Ascending aorta (tissue), 2 donors: ENCODE measurements at regions of chr12 and their contacts with region 1.

Region 1: DNA sequence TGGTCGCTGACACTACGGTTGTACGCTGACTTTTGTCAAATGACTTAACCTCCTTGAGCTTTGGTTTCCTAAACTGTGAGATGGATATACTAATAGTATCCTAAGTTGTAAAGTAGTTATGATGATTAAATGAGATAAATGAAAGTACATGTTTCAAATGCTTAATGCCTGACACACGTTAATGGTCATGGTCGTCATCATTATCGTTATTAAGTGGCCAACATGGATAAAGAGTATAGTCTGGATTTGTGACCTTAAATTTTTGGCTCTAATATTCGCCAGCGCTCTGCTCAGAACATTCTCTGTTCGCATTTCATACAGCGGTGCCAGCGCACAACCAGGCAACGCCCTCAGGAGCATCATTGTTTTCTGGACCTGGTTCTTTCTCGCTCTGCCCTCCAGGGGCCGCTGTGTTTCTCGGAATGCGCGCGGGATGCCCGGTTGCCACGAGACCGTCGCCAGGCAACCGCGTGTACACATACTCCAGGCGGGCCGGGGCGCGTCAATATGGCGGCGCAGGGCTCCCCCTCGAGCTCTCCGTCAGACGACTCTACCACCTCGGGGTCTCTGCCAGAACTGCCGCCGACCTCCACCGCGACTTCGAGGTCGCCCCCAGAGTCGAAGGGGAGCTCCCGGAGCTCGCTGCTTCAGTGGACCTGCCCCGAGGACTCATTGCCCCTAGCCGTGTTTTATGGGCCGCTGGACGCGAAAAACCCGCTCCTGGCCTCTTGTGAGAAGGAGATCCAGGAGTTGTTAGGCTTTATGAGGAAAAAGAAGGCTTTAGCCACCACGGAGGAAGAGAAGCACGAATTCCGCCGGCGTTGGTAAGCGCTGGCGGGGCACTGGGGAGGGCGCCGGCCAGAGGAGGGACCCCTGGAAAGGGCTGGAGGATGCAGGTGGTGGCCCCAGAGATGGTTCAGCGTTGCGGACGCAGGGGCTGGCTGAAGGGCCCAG is at the start of gene CFAP54:
- DNase-seq: peak; percentile 76 to 97
- H3K4me3 ChIP-seq: peak within 1 kb of the TSS; percentile 56 to 82
- H3K27ac ChIP-seq: peak within 1 kb of the TSS; percentile 21 to 55
- H3K4me1 ChIP-seq: peaks cover 2 to 5% of the 10 kb centered on the region in 2 donors
- H3K27me3 ChIP-seq: no peaks in the 10 kb centered on the region
- CTCF ChIP-seq: peak; percentile 86 to 93 (median 89)
- total RNA-seq, gene CFAP54: not detected

Region 2: DNA sequence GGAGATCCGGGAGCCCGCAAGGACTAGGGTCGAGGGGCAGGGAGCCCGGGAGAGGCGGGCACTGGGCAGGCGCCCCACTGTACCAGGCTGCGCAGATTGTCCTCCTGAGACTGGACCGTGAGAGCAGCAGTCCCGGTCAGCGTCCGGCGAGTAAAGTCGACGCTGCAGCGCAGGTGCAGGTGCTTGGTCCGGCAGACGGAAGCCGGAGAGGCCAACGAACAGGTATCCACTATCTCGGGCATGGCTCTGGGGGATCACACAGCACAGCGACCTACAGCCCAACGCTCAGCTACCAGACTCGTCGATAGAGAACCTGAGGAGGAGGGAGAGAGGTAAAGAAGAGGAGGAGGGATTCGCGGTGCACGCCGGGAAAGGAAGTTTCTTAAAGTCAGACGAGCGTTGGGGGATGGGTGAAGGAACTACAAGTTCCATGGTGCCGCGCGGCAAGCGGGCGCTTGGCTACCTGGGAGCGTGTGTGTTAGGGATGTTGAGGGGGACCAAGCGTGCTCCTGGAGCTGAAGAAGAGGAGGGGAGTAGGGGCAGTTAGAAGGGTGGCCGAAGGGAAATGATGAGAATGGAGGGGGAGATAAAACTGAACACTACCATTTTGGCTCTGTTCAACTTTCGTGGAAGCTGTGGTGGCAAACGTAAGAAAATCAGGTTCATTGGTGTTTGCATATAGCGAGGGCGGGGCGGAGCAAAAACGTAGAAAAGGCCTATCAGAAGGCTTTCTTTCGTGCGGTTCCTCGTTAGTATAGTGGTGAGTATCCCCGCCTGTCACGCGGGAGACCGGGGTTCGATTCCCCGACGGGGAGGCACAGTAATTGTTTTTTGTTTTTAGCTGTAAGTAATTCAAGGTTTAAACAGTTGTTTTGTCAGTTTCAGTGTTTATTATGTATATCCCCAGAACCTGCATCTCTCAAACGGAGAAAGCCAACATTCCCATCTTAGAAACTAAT is 453.8 kb before region 1 on chr12 and contains the start of gene LTA4H:
- intact Hi-C with region 1: loop called (anchors 5 kb)
- DNase-seq: peak; percentile 93 to 99
- H3K4me3 ChIP-seq: peak within 1 kb of the TSS; percentile 77 to 83
- H3K27ac ChIP-seq: peak within 1 kb of the TSS; percentile 78 to 93
- H3K4me1 ChIP-seq: peaks cover 0 to 13% of the 10 kb centered on the region in 2 donors
- H3K27me3 ChIP-seq: no peaks in the 10 kb centered on the region
- CTCF ChIP-seq: no peak
- total RNA-seq, gene LTA4H: 47.3 TPM

Region 3: GRCh38 chr12:96194971-96195844 is 294.2 kb before region 1 on chr12:
- intact Hi-C with region 1: loop called (anchors 5 kb)
- DNase-seq: peak; percentile 31 to 81
- H3K4me3 ChIP-seq: peak overlapping the region; percentile 85 to 95
- H3K27ac ChIP-seq: peak overlapping the region; percentile 72 to 77
- H3K4me1 ChIP-seq: peaks cover 5 to 22% of the 10 kb centered on the region in 2 donors
- H3K27me3 ChIP-seq: no peaks in the 10 kb centered on the region
- CTCF ChIP-seq: no peak

Region 4: DNA sequence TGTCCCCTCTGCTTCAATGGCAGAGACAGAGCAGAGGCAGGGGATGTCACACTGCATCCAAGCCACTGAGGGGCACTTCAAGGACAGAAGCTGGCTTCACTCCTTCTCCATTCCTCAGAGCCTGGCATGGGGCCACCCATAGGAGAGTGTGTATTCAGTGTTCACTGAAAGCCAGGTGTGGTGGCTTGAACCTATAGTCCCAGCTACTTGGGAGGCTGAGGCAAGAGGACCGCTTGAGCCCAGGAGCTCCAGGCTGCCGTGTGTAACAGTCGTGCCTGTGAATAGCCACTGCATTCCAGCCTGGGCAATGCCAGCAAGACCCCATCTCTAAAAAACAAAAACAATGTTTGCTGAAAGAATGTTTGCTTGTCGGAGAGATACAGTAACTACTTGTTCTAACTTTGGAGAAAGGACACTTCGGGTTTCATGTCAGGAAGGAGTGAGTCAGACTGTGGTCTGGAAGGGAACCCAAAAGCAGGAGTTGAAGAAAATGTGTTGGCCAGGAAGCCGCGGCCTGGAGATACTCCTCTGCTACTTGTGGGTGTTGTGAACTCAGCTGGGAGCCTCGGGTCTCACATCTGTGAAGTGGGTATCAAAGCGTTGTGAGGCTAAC is 251.8 kb before region 1 on chr12:
- intact Hi-C with region 1: loop called (anchors 5 kb)
- DNase-seq: peak in 1 of 2 donors; percentile 90
- H3K4me3 ChIP-seq: peak overlapping the region in 1 of 2 donors; percentile 12
- H3K27ac ChIP-seq: peak overlapping the region; percentile 69 to 78
- H3K4me1 ChIP-seq: peaks cover 25 to 39% of the 10 kb centered on the region in 2 donors
- H3K27me3 ChIP-seq: no peaks in the 10 kb centered on the region
- CTCF ChIP-seq: no peak

Region 5: DNA sequence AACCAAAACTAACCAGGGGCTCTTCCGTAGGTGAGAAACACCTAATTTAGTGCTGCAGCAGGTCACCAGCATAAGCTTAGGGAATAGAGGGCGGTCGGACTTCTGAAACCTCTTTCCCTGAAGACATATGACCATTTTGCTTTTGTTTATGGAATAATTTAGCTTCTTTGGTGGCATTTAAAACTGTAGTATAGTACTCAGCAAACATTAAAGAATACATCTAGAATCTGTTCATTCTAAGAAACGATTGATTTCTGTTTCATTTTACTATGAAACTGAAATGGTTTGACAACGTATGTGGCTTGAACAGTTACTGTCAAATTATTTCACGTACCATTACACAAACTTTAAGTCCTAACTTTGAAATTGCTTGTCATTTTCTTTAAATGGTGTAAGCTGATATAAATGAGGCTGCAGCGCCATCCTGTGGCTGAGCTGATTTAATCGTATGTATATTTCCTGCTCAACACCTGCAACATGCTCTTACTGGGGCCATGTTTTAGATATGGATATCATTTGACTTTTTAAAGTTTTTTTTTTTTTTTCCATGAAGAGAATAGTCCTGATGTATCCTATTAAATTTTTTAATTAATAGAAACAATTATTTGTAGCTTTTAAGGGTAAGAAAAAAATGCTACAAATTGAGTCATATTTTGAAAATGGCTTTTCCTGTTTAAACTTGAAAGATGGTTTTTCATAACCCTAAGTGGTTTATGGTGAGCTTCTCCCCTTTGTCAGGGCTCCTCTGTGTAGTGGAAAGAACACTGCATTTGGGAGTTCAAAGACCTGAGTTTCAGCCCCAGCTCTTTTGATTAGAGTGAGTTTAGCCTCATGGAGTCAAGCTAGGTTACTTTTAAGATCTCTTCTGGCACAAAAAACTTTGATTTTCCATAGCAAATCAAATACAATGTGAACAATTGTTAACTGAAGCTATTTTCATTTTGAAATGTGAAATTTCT is 27.4 kb after region 1 on chr12:
- intact Hi-C with region 1: loop called (anchors 1 kb)
- DNase-seq: peak in 1 of 2 donors; percentile 82
- H3K4me3 ChIP-seq: no peak overlapping the region
- H3K27ac ChIP-seq: no peak overlapping the region
- H3K4me1 ChIP-seq: no peaks in the 10 kb centered on the region
- H3K27me3 ChIP-seq: no peaks in the 10 kb centered on the region
- CTCF ChIP-seq: peak; percentile 49 to 51 (median 50)